Dorsolateral prefrontal cortex (tissue), 120 donors: ENCODE measurements at regions of chr15 and their contacts with region 1.

Region 1: DNA sequence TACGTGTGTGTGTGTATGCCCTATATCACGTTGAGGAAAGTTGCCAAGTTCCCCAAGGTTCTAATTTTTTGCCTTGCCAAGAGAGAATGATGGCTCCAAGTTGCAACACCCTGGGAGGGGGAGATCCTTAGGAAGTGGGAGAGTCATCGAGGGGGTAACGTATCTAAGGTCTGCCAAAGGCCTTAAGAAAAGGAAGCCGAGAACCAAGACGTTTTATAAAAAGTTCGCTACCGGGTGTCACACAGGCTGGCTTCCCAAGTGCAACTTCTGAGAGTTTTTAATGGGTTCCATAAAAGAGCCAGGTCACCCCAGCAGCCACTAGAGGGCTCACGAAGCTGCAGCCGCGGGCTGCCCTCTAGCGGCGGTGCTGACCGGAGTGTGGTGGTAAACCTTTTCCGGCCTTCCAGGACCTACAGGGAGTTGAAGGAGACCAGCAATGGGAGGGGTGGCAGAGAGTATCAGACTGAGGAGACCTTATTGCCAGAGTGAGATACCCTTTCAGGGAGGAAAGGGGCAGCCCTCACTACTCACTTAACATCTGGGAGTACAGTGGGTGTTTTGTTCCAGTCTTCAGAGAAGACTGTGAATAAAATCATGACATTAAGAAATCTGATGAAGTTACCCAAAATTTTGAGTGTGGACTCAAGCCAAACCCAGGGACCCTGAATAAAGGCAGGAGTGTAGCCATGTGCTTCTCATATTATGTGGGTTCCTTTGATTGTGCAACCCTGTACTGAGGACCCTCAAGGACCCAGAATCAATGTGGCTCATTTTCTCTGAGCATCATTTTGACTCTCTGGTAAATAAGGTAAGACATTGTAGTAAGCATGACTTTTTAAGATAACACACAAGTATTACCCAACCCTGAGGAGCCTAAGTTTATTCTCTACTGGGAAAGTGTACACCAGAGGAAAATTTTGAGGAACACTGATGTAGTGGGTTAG is 2.5 kb upstream of the RFX7 start:
- DNase-seq: peak; percentile 55 to 86 (median 82)
- H3K4me3 ChIP-seq: peak overlapping the region in 56 of 59 donors; percentile 8 to 78 (median 44)
- H3K27ac ChIP-seq: peak overlapping the region in 34 of 59 donors; percentile 12 to 96 (median 87)
- H3K27me3 ChIP-seq: no peaks in the 10 kb centered on the region
- CTCF ChIP-seq: peak; percentile 75 to 100 (median 98)

Region 2: GRCh38 chr15:56428821-56429458 is 182.8 kb after region 1 on chr15:
- intact Hi-C with region 1: loop called (anchors 5 to 10 kb)
- DNase-seq: no peak
- H3K4me3 ChIP-seq: no peak overlapping the region
- H3K27ac ChIP-seq: no peak overlapping the region
- H3K27me3 ChIP-seq: no peaks in the 10 kb centered on the region
- CTCF ChIP-seq: peak; percentile 48 to 81 (median 60)